ENCODE measurements at regions of chr2 and their contacts with region 1.

Region 1: GRCh38 chr2:60550178-60550983 is 3.1 kb downstream of the BCL11A start:
- DNase-seq: peak; percentile 85 to 88 (median 87)
- H3K4me3 ChIP-seq: peak overlapping the region; percentile 64 to 91 (median 82)
- H3K4me3 Mint-ChIP-seq: peak overlapping the region; percentile 96 to 98
- H3K27ac ChIP-seq: peak overlapping the region; percentile 87 to 90
- H3K27ac Mint-ChIP-seq: peak overlapping the region; percentile 91 to 97 (median 95)
- H3K4me1 ChIP-seq: peaks cover 21 to 46% of the 10 kb centered on the region in 2 donors
- H3K4me1 Mint-ChIP-seq: peaks cover 40% of the 10 kb centered on the region
- H3K27me3 ChIP-seq: no peaks in the 10 kb centered on the region
- H3K27me3 Mint-ChIP-seq: peaks cover 0 to 1% (median 0%) of the 10 kb centered on the region in 3 donors
- CTCF ChIP-seq: peak; percentile 92

Region 2: DNA sequence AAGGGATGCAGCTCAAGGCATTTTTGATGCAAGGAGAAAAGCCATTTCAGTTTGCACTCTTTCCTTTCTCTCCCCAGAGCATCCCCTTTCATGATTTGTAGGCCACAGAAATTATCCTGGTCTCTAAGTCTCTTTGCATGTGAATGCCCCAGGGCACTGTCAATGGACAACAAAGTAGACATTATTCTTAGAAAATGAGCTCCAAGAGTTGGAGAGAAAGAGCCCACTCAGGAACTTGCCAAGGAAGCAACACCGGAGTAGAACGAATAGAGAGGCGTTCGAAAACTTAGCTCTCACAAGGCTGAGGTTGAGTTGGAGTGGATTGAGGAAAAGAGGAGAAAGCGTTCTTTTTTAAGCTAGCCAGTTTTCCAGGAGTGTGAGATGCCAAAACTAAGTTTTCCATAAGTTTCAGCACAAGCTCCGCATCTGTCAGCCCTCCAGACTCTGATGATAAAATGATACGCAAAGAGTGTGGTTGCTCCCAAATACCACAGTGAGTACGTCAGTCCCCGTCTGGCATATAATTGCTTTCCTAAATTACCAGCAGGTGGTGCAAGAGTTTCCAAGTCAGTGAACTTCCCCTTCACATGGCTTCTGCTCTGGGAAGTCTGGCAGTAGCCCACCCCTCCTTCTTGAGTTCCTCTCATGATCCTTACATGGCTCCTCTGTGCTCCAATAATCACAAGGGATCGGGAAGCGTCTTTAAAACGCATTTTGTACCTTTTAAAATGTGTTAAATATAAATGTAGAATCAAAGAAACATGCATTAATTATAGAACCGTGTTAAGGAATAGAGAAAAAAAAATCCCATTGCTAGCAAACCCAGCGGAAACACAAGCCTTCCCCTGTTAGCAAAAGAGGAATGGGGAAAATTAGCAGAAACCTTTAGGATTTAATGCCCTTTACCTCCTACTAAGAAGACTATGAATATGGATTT is 1248.6 kb before region 1 on chr2:
- intact Hi-C with region 1: loop called in 1 of 2 experiments (anchors 10 kb)
- DNase-seq: peak; percentile 51 to 67 (median 65)
- H3K4me3 ChIP-seq: no peak overlapping the region
- H3K4me3 Mint-ChIP-seq: no peak overlapping the region
- H3K27ac ChIP-seq: no peak overlapping the region
- H3K27ac Mint-ChIP-seq: no peak overlapping the region
- H3K4me1 ChIP-seq: no peaks in the 10 kb centered on the region
- H3K4me1 Mint-ChIP-seq: no peaks in the 10 kb centered on the region
- H3K27me3 ChIP-seq: no peaks in the 10 kb centered on the region
- H3K27me3 Mint-ChIP-seq: peaks cover 0 to 4% (median 0%) of the 10 kb centered on the region in 3 donors
- CTCF ChIP-seq: peak; percentile 78

Region 3: GRCh38 chr2:60439219-60439974 is 111.0 kb before region 1 on chr2:
- intact Hi-C with region 1: loop called in 1 of 2 experiments (anchors 5 kb)
- DNase-seq: peak; percentile 94 to 97 (median 94)
- H3K4me3 ChIP-seq: peak overlapping the region in 2 of 3 experiments; percentile 2 to 61
- H3K4me3 Mint-ChIP-seq: peak overlapping the region; percentile 70 to 91
- H3K27ac ChIP-seq: peak overlapping the region; percentile 84 to 94
- H3K27ac Mint-ChIP-seq: peak overlapping the region; percentile 93 to 99 (median 96)
- H3K4me1 ChIP-seq: peaks cover 26 to 43% of the 10 kb centered on the region in 2 donors
- H3K4me1 Mint-ChIP-seq: peaks cover 49% of the 10 kb centered on the region
- H3K27me3 ChIP-seq: no peaks in the 10 kb centered on the region
- H3K27me3 Mint-ChIP-seq: peaks cover 0 to 1% (median 0%) of the 10 kb centered on the region in 3 donors
- CTCF ChIP-seq: peak; percentile 96

Region 4: GRCh38 chr2:60484133-60484645 is 66.2 kb before region 1 on chr2:
- intact Hi-C with region 1: loop called (anchors 2 to 10 kb)
- DNase-seq: peak; percentile 85 to 92 (median 89)
- H3K4me3 ChIP-seq: peak overlapping the region; percentile 28 to 57 (median 46)
- H3K4me3 Mint-ChIP-seq: peak overlapping the region; percentile 63 to 98
- H3K27ac ChIP-seq: peak overlapping the region; percentile 82 to 94
- H3K27ac Mint-ChIP-seq: peak overlapping the region; percentile 95 to 99 (median 97)
- H3K4me1 ChIP-seq: peaks cover 59 to 65% of the 10 kb centered on the region in 2 donors
- H3K4me1 Mint-ChIP-seq: peaks cover 83% of the 10 kb centered on the region
- H3K27me3 ChIP-seq: no peaks in the 10 kb centered on the region
- H3K27me3 Mint-ChIP-seq: no peaks in the 10 kb centered on the region
- CTCF ChIP-seq: no peak

Region 5: DNA sequence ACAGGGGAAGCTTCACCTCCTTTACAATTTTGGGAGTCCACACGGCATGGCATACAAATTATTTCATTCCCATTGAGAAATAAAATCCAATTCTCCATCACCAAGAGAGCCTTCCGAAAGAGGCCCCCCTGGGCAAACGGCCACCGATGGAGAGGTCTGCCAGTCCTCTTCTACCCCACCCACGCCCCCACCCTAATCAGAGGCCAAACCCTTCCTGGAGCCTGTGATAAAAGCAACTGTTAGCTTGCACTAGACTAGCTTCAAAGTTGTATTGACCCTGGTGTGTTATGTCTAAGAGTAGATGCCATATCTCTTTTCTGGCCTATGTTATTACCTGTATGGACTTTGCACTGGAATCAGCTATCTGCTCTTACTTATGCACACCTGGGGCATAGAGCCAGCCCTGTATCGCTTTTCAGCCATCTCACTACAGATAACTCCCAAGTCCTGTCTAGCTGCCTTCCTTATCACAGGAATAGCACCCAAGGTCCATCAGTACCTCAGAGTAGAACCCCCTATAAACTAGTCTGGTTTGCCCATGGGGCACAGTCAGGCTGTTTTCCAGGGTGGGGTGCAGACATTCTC is 55.2 kb before region 1 on chr2:
- intact Hi-C with region 1: no loop called
- DNase-seq: no peak
- H3K4me3 ChIP-seq: no peak overlapping the region
- H3K4me3 Mint-ChIP-seq: no peak overlapping the region
- H3K27ac ChIP-seq: no peak overlapping the region
- H3K27ac Mint-ChIP-seq: no peak overlapping the region
- H3K4me1 ChIP-seq: peaks cover 23 to 36% of the 10 kb centered on the region in 2 donors
- H3K4me1 Mint-ChIP-seq: peaks cover 50% of the 10 kb centered on the region
- H3K27me3 ChIP-seq: no peaks in the 10 kb centered on the region
- H3K27me3 Mint-ChIP-seq: peaks cover 0 to 3% (median 1%) of the 10 kb centered on the region in 3 donors
- CTCF ChIP-seq: no peak

Region 6: DNA sequence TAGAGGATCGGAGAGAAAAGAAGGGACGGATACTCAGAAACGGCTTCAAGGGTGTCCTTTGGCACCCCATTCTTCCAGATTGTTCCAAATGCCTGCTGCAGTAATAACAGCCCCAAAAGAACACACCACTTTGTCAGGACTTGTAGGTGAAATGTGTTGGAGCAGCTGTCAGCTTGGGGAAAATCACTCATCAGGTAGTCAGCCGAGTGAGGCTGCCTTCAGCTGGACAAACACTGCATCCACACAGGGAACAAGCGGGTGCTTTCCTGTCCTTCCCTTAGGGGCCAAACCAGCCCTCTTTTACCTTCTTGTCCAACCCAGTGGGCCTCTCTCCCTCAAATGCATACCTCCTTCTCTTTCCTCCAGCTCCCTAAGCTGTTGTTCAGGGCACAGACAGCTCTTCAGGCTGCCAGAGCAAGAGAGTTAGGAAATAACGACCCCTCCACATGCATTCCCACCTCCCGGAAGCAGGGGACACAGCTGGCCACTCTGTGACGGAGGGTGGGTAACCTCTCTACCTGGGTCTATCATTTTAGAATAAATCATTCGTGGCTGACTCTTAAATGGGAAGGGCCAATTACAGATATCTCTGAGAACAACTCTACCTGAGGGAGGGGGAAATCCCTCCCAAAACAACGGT is 45.0 kb before region 1 on chr2:
- intact Hi-C with region 1: no loop called
- DNase-seq: no peak
- H3K4me3 ChIP-seq: no peak overlapping the region
- H3K4me3 Mint-ChIP-seq: no peak overlapping the region
- H3K27ac ChIP-seq: no peak overlapping the region
- H3K27ac Mint-ChIP-seq: peak overlapping the region in 3 of 7 donors; percentile 41 to 84 (median 50)
- H3K4me1 ChIP-seq: peaks cover 24 to 25% of the 10 kb centered on the region in 2 donors
- H3K4me1 Mint-ChIP-seq: peaks cover 51% of the 10 kb centered on the region
- H3K27me3 ChIP-seq: no peaks in the 10 kb centered on the region
- H3K27me3 Mint-ChIP-seq: no peaks in the 10 kb centered on the region
- CTCF ChIP-seq: no peak

Region 7: DNA sequence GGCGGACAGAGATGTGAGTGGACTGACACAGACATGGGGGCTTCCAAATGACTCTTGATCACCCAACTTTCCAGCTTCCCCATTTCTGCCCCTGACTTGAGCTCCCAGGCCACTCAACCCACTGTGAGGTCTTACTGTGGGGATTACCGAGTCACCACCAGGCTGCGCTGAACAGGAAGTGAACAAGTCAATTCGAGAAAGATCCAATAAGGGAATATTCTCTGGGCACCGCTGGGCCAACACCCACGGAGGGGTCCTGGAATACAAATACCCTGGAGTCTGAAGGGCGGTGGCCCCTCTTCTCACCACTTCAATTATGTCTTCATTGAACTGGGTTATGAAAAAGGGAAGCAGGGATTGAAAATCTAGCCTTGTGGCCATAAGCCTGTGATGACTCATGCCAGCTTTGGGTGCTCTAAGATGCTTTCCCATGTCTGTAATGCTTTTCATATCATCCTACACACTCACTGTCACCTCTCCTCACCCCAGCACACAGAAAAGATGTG is 34.6 kb before region 1 on chr2:
- intact Hi-C with region 1: loop called (anchors 2 to 5 kb)
- DNase-seq: peak; percentile 92 to 99 (median 97)
- H3K4me3 ChIP-seq: peak overlapping the region; percentile 1 to 65 (median 49)
- H3K4me3 Mint-ChIP-seq: peak overlapping the region; percentile 78 to 83
- H3K27ac ChIP-seq: peak overlapping the region; percentile 87 to 97
- H3K27ac Mint-ChIP-seq: peak overlapping the region; percentile 94 to 100 (median 99)
- H3K4me1 ChIP-seq: peaks cover 51 to 52% of the 10 kb centered on the region in 2 donors
- H3K4me1 Mint-ChIP-seq: peaks cover 56% of the 10 kb centered on the region
- H3K27me3 ChIP-seq: no peaks in the 10 kb centered on the region
- H3K27me3 Mint-ChIP-seq: no peaks in the 10 kb centered on the region
- CTCF ChIP-seq: peak; percentile 15

Region 8: DNA sequence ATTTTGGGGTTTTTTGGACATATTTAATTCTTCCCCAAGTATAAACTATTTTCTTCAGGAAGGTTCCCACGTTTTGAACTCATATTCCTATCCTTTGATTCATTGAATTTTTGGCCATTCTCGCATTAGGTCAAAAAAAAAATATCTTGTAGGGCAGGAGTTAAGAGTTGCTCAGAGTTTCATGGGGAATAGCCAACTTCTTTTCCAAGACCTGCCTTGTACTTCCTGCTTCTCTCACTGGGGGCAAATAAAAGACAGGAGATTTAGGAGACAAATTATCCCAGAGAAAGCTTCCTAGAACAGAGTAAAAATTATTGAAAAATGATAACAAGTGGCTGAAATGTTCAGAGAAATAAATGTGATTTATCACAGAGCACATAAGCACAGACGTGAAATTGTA is 58.3 kb after region 1 on chr2:
- intact Hi-C with region 1: no loop called
- DNase-seq: no peak
- H3K4me3 ChIP-seq: no peak overlapping the region
- H3K4me3 Mint-ChIP-seq: no peak overlapping the region
- H3K27ac ChIP-seq: no peak overlapping the region
- H3K27ac Mint-ChIP-seq: no peak overlapping the region
- H3K4me1 ChIP-seq: no peaks in the 10 kb centered on the region
- H3K4me1 Mint-ChIP-seq: peaks cover 8% of the 10 kb centered on the region
- H3K27me3 ChIP-seq: no peaks in the 10 kb centered on the region
- H3K27me3 Mint-ChIP-seq: peaks cover 0 to 1% (median 0%) of the 10 kb centered on the region in 3 donors
- CTCF ChIP-seq: no peak

Region 9: DNA sequence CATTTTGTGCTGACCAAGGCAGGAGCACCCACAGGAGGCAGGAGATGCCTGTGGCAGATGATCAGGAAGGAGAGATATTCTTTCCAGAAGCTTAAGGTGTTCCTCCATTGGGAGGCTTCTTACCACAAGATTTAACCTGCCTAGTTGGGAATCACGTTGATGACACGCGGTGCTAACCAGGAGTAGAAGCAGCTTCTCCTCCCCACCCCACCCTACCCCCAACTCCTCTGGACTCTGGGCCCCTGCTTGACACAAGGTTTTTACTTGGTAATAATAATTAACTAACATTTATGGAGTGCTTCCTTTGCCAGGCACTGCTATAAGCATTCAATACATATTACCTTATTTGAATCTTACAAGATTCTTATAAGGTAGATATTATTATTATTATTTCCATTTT is 143.2 kb after region 1 on chr2:
- intact Hi-C with region 1: no loop called
- DNase-seq: no peak
- H3K4me3 ChIP-seq: no peak overlapping the region
- H3K4me3 Mint-ChIP-seq: no peak overlapping the region
- H3K27ac ChIP-seq: no peak overlapping the region
- H3K27ac Mint-ChIP-seq: peak overlapping the region in 1 of 7 donors; percentile 46
- H3K4me1 ChIP-seq: no peaks in the 10 kb centered on the region
- H3K4me1 Mint-ChIP-seq: peaks cover 8% of the 10 kb centered on the region
- H3K27me3 ChIP-seq: no peaks in the 10 kb centered on the region
- H3K27me3 Mint-ChIP-seq: peaks cover 0 to 3% (median 3%) of the 10 kb centered on the region in 3 donors
- CTCF ChIP-seq: no peak

Measured in CD14-positive monocyte (primary cell).